Activated naive CD4-positive, alpha-beta T cell treated with anti-CD3 and anti-CD28 coated beads for 36 hours (primary cell): ENCODE measurements at regions of chr6 and their contacts with region 1.

Region 1: GRCh38 chr6:88982720-88983119 is 19.3 kb upstream of the RNGTT start:
- DNase-seq: peak; percentile 37
- H3K4me3 Mint-ChIP-seq: no peak overlapping the region
- H3K27ac Mint-ChIP-seq: no peak overlapping the region
- H3K4me1 Mint-ChIP-seq: no peaks in the 10 kb centered on the region
- H3K27me3 Mint-ChIP-seq: no peaks in the 10 kb centered on the region

Region 2: DNA sequence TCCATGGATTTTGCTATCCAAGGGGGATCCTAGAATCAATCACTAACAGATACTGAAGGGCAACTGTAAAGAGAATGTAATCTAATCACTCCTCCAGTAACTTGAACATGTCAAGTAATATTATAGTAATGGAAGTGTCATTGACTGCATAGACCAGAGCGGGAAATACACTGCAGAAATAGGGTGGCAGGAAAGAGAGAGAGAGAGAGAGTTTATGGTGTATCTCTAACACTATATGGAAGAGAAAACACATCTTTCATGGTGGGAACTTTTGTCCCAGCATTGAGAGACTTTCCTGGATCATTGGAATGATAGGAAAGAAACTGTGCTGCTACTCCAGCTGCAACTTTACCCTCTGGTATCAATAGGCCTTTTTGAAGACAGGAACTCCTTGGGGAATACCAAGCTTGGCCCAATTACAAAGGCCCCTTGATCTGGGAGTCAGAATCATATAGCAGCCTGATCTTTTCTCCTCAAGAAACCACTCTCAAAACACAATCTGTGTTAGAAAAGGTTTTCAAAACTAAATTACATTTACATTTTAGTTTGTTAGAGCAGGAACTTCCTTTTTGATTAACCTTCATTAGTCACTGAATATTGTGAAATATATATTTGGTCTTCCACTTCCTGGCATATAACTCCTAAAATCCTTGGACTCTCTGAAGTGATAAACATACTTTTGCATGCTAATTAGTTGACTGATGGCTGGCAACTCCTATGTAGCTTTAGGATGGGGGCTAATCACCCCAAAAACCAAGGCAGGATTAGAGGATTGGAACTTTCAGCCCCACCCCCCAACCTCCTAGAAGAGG is 10.2 kb after region 1 on chr6:
- CTCF ChIA-PET with region 1: interaction called, 18 read pairs
- intact Hi-C with region 1: no loop called
- DNase-seq: no peak
- H3K4me3 Mint-ChIP-seq: no peak overlapping the region
- H3K27ac Mint-ChIP-seq: no peak overlapping the region
- H3K4me1 Mint-ChIP-seq: no peaks in the 10 kb centered on the region
- H3K27me3 Mint-ChIP-seq: no peaks in the 10 kb centered on the region

Region 3: DNA sequence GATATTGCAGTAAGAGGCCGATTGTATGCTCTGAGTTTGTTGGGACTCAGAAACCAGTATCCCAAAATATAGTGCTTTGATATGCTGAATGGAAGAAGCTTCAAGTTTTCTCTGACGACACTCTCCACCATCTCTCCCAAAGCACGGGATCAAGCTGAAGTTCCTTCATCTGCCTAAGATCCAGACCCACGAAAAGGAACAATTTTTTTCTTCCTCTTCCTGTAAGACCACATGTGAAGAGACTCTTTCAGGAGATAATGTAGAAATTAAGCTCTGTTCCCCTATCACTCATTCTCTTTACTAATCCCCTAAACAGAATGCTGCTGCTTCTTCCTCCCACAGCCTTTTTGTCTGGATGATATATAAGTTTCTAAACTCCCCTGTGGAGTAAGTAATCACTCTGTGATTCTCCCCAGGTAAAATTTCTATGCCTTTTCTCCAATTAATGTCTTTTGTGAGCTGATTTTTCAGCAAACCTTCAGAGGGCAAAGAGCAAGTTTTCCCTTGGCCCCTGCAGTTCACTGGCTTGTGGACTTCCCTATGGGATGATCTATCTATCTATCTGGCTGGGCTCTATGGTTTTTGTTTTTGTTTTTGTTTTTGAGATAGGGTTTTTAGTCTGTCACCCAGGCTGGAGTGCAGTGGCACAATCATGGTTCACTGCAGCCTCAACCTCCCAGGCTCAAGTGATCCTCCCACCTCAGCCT is 84.4 kb after region 1 on chr6:
- CTCF ChIA-PET with region 1: no interaction called
- intact Hi-C with region 1: no loop called
- DNase-seq: no peak
- H3K4me3 Mint-ChIP-seq: no peak overlapping the region
- H3K27ac Mint-ChIP-seq: no peak overlapping the region
- H3K4me1 Mint-ChIP-seq: no peaks in the 10 kb centered on the region
- H3K27me3 Mint-ChIP-seq: no peaks in the 10 kb centered on the region

Region 4: GRCh38 chr6:89122625-89123024 is 139.9 kb after region 1 on chr6:
- CTCF ChIA-PET with region 1: interaction called, 13 read pairs
- intact Hi-C with region 1: loop called (anchors 1 kb)
- DNase-seq: peak; percentile 21
- H3K4me3 Mint-ChIP-seq: no peak overlapping the region
- H3K27ac Mint-ChIP-seq: no peak overlapping the region
- H3K4me1 Mint-ChIP-seq: no peaks in the 10 kb centered on the region
- H3K27me3 Mint-ChIP-seq: no peaks in the 10 kb centered on the region

Region 5: DNA sequence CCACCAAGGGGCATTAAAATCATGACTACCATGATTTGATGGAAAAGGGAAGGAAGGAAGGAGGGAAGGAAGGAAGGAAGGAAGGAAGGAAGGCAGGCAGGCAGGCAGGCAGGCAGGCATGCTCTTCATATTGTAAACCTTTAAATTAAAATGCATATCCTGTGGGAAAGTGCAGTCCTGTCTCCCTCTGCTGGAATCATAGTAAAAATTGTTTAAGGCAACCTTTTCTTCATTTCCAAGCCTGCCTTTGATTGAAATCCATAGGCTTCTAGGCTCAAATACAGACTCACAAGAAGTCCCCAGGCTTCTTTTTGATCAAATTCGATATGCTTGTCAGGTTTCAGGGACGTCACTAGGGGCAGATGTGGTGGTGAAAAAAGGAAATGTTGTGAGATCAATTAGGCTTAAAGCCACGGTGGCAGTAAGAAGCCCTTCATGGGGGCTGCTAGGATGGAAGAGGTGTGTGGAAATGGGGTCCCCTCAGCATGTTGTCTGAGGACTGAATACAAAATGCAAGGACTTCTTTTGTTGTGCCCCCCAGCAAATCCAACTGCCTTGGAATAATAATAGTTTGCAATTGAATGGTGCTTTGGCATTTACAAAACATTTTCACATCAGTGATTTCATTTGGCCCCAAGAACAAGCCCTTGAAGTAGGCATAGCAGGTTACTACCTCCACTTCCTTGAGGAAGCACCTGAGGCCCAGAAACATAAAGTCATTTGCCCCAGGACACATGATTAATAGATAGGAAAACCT is 260.0 kb after region 1 on chr6:
- CTCF ChIA-PET with region 1: interaction called, 55 read pairs
- intact Hi-C with region 1: loop called (anchors 1 kb)
- DNase-seq: peak; percentile 35
- H3K4me3 Mint-ChIP-seq: no peak overlapping the region
- H3K27ac Mint-ChIP-seq: no peak overlapping the region
- H3K4me1 Mint-ChIP-seq: peaks cover 10% of the 10 kb centered on the region
- H3K27me3 Mint-ChIP-seq: peaks cover 6% of the 10 kb centered on the region

Region 6: DNA sequence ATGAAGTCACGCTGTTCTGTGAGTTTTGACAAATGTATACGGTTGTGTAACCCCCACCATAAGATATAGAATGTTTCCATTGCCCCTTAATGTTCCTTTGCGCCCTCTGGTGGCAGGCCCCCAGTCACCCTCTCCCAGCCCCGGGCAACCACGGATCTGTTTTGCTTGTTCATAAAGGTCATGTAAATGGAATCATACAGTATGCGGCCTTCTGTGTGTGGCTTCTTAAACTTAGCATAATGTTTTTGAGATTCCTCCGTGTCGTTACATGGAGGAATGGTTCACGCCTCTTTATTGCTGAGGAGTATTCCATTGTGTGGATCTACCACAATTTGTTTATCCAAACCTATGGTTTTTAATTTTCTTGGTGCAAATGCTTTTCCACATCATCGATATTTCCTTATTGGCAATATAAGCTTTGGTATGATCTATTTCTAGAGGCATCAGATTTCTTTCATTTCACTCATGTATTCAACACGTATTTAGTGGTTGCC is 627.5 kb after region 1 on chr6:
- CTCF ChIA-PET with region 1: interaction called, 4 read pairs
- intact Hi-C with region 1: loop called (anchors 1 kb)
- DNase-seq: peak; percentile 84
- H3K4me3 Mint-ChIP-seq: no peak overlapping the region
- H3K27ac Mint-ChIP-seq: no peak overlapping the region
- H3K4me1 Mint-ChIP-seq: no peaks in the 10 kb centered on the region
- H3K27me3 Mint-ChIP-seq: no peaks in the 10 kb centered on the region